ENCODE measurements at regions of chr11 and their contacts with region 1.

Region 1: DNA sequence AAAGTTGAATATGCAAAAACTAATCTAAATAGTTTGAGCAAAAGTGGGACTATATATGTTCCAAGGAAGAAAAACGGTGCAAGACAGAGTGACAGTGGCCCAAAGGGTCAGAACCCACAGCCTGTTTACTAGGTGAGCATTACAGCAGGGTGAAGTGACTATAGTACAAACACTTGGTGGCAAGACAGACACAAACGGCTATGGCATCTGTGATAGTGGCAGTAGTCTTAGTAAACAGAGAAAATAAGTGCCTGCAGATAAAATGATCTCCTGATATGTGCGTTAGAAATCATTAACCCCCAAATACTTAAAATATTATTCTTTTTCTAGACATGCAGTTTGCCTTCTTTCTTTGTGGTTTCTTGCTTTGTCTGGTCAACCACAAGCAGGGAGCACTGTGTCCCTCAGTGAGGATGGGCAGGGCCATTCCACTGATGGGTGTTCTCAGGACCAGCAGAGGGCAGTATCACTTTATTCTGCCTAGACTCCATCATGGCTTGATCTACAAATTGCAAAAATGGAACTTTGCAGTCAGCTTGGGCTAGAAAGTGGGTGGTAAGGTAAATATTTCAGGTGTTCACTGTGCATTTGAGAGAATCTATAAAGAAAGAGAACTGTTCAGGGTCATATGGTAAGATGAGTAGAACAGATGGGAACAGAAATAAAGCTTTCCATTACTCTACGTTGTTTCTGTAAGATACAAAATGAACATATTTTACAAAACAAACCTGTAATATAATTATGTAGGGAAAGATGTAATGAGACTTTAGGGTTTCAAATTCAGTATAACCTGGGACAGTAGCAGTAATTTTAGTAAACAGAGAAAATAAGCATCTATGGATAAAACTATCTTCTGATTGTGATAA is 198.2 kb downstream of the SWAP70 start:
- DNase-seq: peak; percentile 71
- H3K4me3 Mint-ChIP-seq: no peak overlapping the region
- H3K27ac Mint-ChIP-seq: no peak overlapping the region
- H3K4me1 Mint-ChIP-seq: peaks cover 30% of the 10 kb centered on the region
- H3K27me3 Mint-ChIP-seq: no peaks in the 10 kb centered on the region

Region 2: GRCh38 chr11:9825315-9825714 is 36.8 kb before region 1 on chr11:
- CTCF ChIA-PET with region 1: no interaction called
- intact Hi-C with region 1: no loop called
- DNase-seq: no peak
- H3K4me3 Mint-ChIP-seq: no peak overlapping the region
- H3K27ac Mint-ChIP-seq: no peak overlapping the region
- H3K4me1 Mint-ChIP-seq: no peaks in the 10 kb centered on the region
- H3K27me3 Mint-ChIP-seq: no peaks in the 10 kb centered on the region

Region 3: DNA sequence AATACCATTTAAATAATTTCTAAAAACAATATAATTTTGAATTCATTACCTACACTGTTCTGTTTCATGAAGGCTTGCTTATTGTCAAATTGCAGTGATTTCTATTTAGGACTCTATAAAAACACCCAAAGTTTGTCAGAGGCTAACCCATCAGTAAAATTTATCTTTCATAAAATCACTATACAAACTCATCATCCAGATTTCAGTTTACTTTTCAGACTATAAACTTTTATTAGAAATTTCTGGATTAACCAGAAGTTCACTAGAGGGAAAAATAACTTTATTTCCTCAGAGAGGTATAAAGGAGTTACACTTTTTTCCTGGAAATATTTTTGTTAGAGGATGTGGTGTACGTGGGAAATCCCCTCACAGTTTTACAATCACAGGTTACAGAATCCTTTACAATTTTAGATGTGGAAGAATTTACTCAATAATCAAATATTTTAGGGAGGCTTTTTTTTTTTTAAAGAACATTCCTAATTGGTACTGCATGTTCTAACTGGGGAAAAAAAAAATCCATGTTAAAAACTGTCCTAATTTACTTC is 21.6 kb before region 1 on chr11:
- CTCF ChIA-PET with region 1: interaction called, 6 read pairs
- intact Hi-C with region 1: loop called (anchors 1 kb)
- DNase-seq: no peak
- H3K4me3 Mint-ChIP-seq: no peak overlapping the region
- H3K27ac Mint-ChIP-seq: peak overlapping the region; percentile 59
- H3K4me1 Mint-ChIP-seq: peaks cover 41% of the 10 kb centered on the region
- H3K27me3 Mint-ChIP-seq: no peaks in the 10 kb centered on the region

Region 4: DNA sequence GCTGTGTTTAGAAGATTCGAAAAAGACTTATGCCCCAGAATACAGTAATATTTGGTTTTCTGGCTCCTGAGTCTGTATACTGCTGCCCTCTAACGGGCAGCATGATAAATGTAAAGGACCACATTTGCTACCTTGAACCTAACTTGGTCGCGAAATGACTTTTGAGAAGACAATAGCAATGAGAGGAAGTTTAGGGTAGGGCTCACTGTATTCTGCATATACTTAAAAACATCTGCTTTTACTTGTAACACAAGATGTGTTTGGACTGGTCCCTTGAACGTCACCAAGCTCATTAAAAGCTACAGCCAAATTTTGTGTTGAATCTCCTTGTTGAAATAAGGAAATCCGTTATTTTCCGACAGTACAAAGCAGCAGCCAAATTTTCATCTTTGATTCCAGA is 110.9 kb after region 1 on chr11:
- CTCF ChIA-PET with region 1: interaction called, 20 read pairs
- intact Hi-C with region 1: loop called (anchors 1 kb)
- DNase-seq: peak; percentile 54
- H3K4me3 Mint-ChIP-seq: no peak overlapping the region
- H3K27ac Mint-ChIP-seq: no peak overlapping the region
- H3K4me1 Mint-ChIP-seq: no peaks in the 10 kb centered on the region
- H3K27me3 Mint-ChIP-seq: no peaks in the 10 kb centered on the region

Region 5: DNA sequence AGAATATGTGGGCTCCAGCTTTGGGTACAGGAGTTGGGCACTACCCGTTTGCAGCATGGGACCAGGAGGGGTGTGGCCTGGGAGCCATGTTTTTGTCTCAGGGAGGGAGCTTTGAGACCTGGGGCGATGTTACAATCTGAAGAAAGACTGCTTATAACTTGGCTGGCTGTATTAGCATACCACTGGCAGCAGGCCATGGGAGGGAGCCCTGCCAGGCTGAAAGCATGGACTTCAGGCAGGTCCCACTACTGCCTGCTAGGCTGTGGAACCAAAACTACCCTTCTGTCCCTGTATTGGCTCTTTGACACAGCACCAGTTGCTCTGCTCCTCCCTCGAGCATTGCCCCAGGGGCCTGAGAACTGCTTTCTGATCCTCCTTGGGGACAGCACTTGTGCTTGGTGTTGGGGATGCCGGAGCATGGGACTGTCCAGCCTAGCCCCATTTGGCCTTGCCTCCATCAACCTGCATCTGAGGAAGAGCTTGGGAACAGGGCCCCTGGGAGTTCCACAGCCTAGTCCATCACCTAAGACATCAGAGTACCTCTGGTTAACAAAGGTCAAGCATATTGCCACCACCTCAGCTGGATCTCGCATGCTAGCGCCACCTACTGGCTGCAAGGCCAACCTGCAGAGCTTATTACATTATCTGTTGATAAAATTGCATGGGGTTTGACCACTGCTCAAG is 214.5 kb after region 1 on chr11:
- CTCF ChIA-PET with region 1: interaction called, 7 read pairs
- intact Hi-C with region 1: loop called (anchors 1 kb)
- DNase-seq: peak; percentile 49
- H3K4me3 Mint-ChIP-seq: no peak overlapping the region
- H3K27ac Mint-ChIP-seq: no peak overlapping the region
- H3K4me1 Mint-ChIP-seq: no peaks in the 10 kb centered on the region
- H3K27me3 Mint-ChIP-seq: no peaks in the 10 kb centered on the region